Motor neuron (in vitro differentiated cells): ENCODE measurements at regions of chr12 and their contacts with region 1.

Region 1: DNA sequence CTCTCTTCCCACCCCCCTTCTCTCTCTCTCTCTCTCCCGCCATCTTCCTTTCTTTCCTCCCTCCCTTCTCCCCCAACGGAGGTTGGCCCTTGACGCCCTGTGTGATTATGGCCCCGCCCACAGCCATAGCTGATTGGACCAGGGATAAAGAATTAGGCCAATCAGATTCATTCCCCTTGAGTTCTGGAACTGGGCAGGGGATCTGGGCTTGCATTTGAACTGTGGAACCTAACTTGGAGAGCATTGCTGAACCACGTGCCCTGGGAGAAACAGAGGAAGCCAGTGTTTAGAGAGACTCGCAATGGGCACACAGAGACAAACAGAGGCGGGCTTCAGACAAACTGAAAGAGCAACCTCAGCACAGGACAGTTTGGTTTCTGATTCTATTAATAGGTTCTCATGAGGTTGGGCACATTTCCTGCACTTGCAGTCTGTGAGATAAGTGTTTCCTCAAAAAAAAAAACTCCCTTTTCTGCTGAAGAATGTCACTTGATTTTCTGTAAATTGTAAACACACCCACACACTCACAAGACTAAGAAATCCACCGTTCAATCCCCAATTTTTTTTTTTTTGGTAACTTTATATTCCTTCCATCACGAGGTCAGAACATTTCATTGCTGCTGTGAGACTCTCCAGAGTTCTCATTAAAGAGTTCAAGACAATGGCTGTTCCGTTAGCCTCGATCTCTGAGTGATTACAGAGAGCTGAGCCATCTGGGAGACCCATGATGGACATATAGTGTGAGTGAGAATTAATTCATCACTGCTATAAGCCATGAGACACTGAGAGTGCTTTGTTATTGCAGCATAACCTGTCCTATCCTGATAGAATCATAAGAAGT is 3.5 kb upstream of the P2RX7 start:
- ATAC-seq: peak in 3 of 8 experiments; percentile 48 to 73 (median 63)
- H3K4me3 ChIP-seq: no peak overlapping the region
- H3K27ac ChIP-seq: no peak overlapping the region
- H3K4me1 ChIP-seq: peaks cover 12 to 16% of the 10 kb centered on the region in 2 donors

Region 2: DNA sequence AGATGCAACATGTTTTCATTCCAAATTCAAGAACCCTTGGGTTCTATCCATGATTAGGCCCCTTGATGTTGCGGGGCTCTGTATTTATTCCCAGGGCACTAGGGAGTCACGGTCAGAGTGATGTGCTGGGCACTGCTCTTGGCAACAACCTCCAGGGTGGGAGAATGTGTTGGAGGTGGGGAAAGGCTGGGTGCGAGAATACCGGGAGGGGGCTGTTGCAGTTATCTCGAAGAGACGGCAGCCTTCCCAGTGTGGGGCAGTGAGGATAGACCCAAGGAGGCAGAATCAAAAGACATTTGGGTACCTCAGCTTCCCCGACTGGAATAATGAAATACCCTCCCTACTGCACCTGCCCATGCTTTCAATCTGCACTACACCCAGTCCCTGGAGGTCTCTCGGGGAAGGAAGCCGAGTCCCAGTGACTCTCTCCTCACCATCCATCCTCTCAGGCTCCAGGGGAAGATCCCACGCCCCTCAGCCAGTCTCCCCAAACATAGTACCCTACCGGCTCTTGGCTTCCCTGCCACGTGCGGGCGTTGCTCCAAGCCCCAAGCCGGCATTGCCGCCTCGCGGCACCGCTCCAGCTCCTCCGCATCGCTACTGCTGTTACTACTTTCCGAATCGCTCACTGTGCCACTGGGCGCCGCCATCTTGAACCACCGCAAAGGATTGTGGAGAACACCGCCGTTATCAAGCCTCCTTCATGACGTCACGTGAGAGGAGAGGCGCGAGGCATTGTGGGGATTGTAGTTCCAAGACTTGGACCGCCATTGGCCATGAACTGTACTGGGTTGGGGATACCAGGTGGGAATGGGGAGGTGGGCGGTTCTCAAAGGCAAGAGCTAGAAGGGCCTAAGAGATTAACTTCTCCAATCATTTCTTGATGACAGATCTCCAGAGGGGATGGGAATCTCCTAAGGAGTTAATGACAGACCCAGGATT is 113.1 kb before region 1 on chr12 and contains the start of gene C12orf43:
- in situ Hi-C with region 1: no loop called
- ATAC-seq: peak; percentile 95 to 99 (median 96)
- H3K4me3 ChIP-seq: peak within 1 kb of the TSS; percentile 64 to 96 (median 81)
- H3K27ac ChIP-seq: peak within 1 kb of the TSS; percentile 68 to 81
- H3K4me1 ChIP-seq: peaks cover 0 to 6% of the 10 kb centered on the region in 2 donors
- total RNA-seq, gene C12orf43: 8.2 to 19.7 (median 12.7) TPM

Region 3: DNA sequence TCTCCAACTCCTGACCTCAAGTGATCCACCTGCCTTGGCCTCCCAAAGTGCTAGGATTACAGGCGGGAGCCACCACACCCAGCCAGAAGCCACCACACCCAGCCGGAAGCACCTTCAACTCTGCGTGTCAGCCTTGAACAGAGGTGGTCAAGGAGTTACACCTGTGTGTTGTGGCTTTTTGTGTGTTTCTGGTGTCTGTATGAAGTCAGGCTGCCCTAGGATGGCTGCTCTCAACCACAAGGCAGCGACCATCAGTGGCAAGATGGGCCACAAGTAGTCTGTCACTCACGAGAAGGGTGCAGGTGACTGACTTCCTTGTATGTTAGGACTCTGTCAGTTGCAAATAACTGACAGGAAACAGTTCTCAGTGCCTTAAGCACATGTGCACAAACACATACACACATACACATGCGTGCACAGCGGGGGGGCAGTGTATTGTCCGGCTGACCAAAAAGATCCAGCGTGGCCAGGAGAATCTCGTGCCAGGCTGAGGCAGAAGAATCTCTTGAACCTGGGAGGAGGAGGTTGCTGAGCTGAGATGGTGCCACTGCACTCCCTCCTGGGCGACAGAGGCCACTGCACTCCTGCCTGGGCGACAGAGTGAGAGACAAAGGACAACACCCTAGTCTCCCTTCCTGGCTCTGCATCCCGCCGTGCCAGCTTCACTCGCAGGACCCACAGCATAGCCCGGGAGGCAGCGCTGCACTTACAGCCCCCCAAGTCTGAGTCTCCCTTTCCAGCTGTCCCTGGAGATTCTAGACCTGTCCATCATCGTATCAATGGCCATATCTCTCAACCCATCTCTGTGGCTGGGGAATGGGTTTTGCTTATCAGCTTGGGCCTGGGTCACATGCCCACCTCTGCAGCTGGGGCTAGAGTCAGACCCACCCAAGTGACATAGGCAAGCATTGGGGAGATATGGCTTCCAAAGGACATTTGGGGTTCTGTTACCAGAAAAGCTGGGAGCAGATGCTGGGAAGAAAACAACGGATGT is 94.4 kb after region 1 on chr12:
- in situ Hi-C with region 1: loop called in 1 of 9 experiments (anchors 10 kb)
- ATAC-seq: peak in 2 of 8 experiments; percentile 41 to 47
- H3K4me3 ChIP-seq: no peak overlapping the region
- H3K27ac ChIP-seq: no peak overlapping the region
- H3K4me1 ChIP-seq: no peaks in the 10 kb centered on the region